ENCODE measurements at regions of chr16 and their contacts with region 1.

Region 1: GRCh38 chr16:29877266-29877961 is 14.4 kb upstream of the CDIPT start:
- DNase-seq: no peak

Region 2: DNA sequence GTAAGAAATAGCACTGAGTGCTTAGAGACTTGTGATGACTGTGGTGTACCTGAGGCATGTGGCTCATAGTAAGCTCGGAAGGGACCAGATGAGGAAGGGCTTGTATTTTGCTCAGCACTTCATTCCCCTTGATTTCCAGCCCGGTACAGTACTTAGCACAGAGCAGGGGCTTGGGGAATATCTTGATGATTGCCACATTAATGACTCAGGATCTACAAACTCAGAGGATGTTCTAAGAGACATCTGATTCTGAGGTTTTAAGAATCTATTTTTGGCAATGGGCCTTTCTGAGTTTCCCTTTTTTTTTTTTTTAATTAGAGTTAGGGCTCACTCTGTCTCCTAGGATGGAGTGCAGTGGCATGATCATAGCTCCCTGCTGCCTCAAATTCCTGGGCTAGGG is 32.0 kb after region 1 on chr16:
- intact Hi-C with region 1: no loop called
- DNase-seq: no peak

Region 3: GRCh38 chr16:29943846-29944669 is 66.6 kb after region 1 on chr16:
- intact Hi-C with region 1: loop called in 1 of 2 experiments (anchors 10 kb)
- DNase-seq: peak; percentile 83

Measured in posterior vena cava (tissue), 2 donors.